CD8-positive, alpha-beta T cell (primary cell): ENCODE measurements at regions of chr6 and their contacts with region 1.

Region 1: GRCh38 chr6:37705239-37706051 is 7.8 kb upstream of the MDGA1 start:
- DNase-seq: peak; percentile 47 to 89 (median 80)
- ATAC-seq: peak; percentile 95
- H3K4me3 ChIP-seq: peak overlapping the region; percentile 56 to 66
- H3K4me3 Mint-ChIP-seq: peak overlapping the region; percentile 84
- H3K27ac ChIP-seq: peak overlapping the region in 1 of 2 experiments; percentile 36
- H3K27ac Mint-ChIP-seq: peak overlapping the region; percentile 62
- H3K4me1 ChIP-seq: peaks cover 6% of the 10 kb centered on the region
- H3K4me1 Mint-ChIP-seq: peaks cover 15% of the 10 kb centered on the region
- H3K27me3 ChIP-seq: no peaks in the 10 kb centered on the region
- H3K27me3 Mint-ChIP-seq: no peaks in the 10 kb centered on the region
- CTCF ChIP-seq: peak; percentile 62

Region 2: GRCh38 chr6:36907781-36908180 is 797.7 kb before region 1 on chr6:
- CTCF ChIA-PET with region 1: no interaction called
- POLR2A ChIA-PET with region 1: no interaction called
- intact Hi-C with region 1: no loop called
- DNase-seq: no peak
- ATAC-seq: no peak
- H3K4me3 ChIP-seq: no peak overlapping the region
- H3K4me3 Mint-ChIP-seq: no peak overlapping the region
- H3K27ac ChIP-seq: no peak overlapping the region
- H3K27ac Mint-ChIP-seq: peak overlapping the region; percentile 69
- H3K4me1 ChIP-seq: peaks cover 14% of the 10 kb centered on the region
- H3K4me1 Mint-ChIP-seq: peaks cover 24% of the 10 kb centered on the region
- H3K27me3 ChIP-seq: no peaks in the 10 kb centered on the region
- H3K27me3 Mint-ChIP-seq: no peaks in the 10 kb centered on the region
- CTCF ChIP-seq: no peak

Region 3: GRCh38 chr6:37791156-37791919 is 85.9 kb after region 1 on chr6:
- CTCF ChIA-PET with region 1: interaction called, 5 read pairs
- POLR2A ChIA-PET with region 1: no interaction called
- intact Hi-C with region 1: loop called in 1 of 2 experiments (anchors 5 kb)
- DNase-seq: peak; percentile 44 to 84 (median 80)
- ATAC-seq: peak; percentile 99
- H3K4me3 ChIP-seq: no peak overlapping the region
- H3K4me3 Mint-ChIP-seq: no peak overlapping the region
- H3K27ac ChIP-seq: no peak overlapping the region
- H3K27ac Mint-ChIP-seq: no peak overlapping the region
- H3K4me1 ChIP-seq: peaks cover 7% of the 10 kb centered on the region
- H3K4me1 Mint-ChIP-seq: peaks cover 3% of the 10 kb centered on the region
- H3K27me3 ChIP-seq: no peaks in the 10 kb centered on the region
- H3K27me3 Mint-ChIP-seq: no peaks in the 10 kb centered on the region
- CTCF ChIP-seq: peak; percentile 66

Region 4: DNA sequence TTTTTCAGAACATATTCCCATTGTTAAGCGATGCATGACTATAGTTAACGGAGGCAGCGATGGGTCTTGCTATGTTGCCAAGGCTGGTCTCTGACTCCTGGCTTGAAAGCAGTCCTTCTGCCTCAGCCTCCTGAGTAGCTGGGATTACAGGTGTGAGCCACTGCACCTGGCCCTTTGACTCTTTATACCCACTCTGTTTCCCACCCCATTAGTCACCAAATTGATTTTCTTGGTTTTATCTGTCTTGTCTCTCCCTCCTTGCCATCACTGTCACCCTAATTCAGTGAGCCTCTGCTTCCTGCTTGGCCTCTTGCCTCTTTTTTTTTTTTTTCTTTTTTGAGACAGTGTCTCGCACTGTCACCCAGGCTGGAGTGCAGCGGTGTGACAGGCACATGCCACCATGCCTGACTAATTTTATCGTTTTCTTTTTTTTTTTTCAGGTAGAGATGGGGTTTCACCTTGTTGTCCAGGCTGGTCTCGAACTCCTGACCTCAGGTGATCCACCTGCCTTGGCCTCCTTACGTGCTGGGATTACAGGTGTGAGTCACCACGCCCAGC is 145.4 kb after region 1 on chr6:
- CTCF ChIA-PET with region 1: interaction called, 5 read pairs
- POLR2A ChIA-PET with region 1: no interaction called
- intact Hi-C with region 1: loop called (anchors 5 to 10 kb)
- DNase-seq: peak in 2 of 9 experiments; percentile 24 to 25
- ATAC-seq: peak; percentile 36
- H3K4me3 ChIP-seq: no peak overlapping the region
- H3K4me3 Mint-ChIP-seq: no peak overlapping the region
- H3K27ac ChIP-seq: no peak overlapping the region
- H3K27ac Mint-ChIP-seq: no peak overlapping the region
- H3K4me1 ChIP-seq: peaks cover 38% of the 10 kb centered on the region
- H3K4me1 Mint-ChIP-seq: peaks cover 62% of the 10 kb centered on the region
- H3K27me3 ChIP-seq: no peaks in the 10 kb centered on the region
- H3K27me3 Mint-ChIP-seq: no peaks in the 10 kb centered on the region
- CTCF ChIP-seq: no peak

Region 5: GRCh38 chr6:37860226-37860839 is 154.9 kb after region 1 on chr6:
- CTCF ChIA-PET with region 1: interaction called, 5 read pairs
- POLR2A ChIA-PET with region 1: no interaction called
- intact Hi-C with region 1: loop called (anchors 5 to 10 kb)
- DNase-seq: peak in 4 of 9 experiments; percentile 29 to 62 (median 41)
- ATAC-seq: no peak
- H3K4me3 ChIP-seq: no peak overlapping the region
- H3K4me3 Mint-ChIP-seq: no peak overlapping the region
- H3K27ac ChIP-seq: no peak overlapping the region
- H3K27ac Mint-ChIP-seq: no peak overlapping the region
- H3K4me1 ChIP-seq: peaks cover 7% of the 10 kb centered on the region
- H3K4me1 Mint-ChIP-seq: peaks cover 74% of the 10 kb centered on the region
- H3K27me3 ChIP-seq: no peaks in the 10 kb centered on the region
- H3K27me3 Mint-ChIP-seq: no peaks in the 10 kb centered on the region
- CTCF ChIP-seq: peak; percentile 39